ENCODE measurements at regions of chr11 and their contacts with region 1.

Region 1: DNA sequence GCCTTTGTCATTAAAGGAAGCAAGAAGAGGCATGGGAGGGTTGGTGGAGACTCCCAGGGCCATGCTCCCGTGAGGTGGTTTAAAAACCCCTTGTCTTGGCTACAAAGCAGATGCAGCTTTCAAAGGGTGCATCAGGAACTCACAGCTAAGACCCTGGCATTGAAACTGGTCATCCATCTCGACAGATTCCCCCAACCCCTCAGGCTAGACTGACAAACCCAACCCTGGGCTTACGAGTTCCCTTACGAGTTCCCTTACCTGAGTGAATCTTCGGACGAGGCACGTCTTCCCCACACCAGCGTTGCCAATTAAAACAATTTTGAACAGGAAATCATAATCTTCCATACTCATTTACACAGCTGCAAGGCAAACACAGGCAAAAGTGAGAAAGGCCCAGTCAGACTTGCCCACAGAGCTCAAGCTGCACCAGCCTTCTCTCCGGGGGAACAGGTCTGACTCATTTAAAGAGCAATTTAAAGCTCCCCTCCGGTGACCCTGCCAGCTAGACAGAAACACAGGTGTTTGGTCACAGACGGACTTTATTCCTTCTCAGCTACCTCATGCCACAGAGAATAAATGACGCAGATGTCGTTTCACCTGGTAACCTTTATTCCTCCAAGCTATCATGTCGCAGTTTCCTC is 74.6 kb downstream of the RAB30 start:
- DNase-seq: no peak
- H3K4me3 Mint-ChIP-seq: no peak overlapping the region
- H3K27ac Mint-ChIP-seq: peak overlapping the region; percentile 80
- H3K4me1 Mint-ChIP-seq: peaks cover 78% of the 10 kb centered on the region
- H3K27me3 Mint-ChIP-seq: no peaks in the 10 kb centered on the region

Region 2: DNA sequence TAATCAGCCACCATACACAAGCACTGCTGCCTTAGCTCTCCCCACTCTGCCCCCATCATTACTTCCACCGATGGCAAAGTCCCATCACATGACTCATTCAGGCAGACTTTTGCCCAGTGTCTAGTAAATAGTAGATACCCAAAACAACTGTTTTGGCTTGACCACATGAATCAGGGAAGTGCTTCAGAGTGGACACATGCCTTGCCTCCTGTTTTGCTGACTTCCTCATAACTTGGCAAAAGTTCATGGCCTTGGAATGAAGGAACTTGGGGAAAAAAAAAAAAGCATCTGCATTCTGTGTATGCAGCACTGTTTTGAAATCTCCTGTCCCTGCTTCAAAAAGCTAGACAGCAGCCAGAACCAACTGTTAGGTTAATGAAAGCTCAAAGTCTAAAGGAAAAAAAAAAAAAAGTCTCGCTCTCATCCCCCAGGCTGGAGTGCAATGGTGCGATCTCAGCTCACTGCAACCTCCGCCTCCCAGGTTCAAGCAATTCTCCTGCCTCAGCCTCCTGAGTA is 598.7 kb before region 1 on chr11:
- intact Hi-C with region 1: no loop called
- DNase-seq: no peak
- H3K4me3 Mint-ChIP-seq: no peak overlapping the region
- H3K27ac Mint-ChIP-seq: no peak overlapping the region
- H3K4me1 Mint-ChIP-seq: no peaks in the 10 kb centered on the region
- H3K27me3 Mint-ChIP-seq: no peaks in the 10 kb centered on the region

Region 3: DNA sequence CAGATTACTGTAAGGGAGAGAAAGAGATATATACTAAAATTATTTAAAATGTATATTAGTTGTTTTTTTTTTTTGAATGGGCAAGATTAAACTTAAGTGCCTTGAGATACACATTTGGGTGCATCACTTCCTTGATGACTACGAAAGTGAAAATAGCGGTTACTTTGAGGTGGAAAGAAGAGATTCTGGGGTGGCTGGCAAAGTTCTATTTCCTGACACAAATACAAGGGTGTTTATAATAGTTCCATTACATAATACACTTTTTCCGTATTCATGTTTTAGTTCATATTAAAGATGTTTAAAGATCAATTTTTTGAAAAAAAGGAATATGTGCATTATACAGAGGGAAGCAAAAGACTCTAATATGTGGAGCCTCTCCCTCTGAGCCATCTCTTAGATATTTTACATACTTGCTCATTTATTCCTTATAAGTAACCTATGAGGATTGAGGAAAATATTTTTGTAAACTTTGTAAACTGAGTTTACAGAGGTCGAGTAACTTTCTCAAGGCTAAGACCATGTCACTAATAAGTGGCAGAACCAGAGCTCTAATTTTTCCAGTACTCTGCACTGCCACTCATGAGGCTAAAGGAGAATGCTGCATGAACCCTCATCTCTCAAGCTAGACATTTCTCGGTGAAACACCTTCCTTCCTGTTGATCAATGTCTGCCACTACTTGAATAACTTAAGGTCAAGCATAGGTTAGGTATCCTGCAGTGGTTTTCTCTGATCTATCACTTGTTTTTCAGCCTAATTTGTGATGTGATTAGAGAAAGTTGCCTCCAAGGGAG is 36.9 kb before region 1 on chr11:
- intact Hi-C with region 1: loop called (anchors 1 kb)
- DNase-seq: peak; percentile 47
- H3K4me3 Mint-ChIP-seq: peak overlapping the region; percentile 34
- H3K27ac Mint-ChIP-seq: peak overlapping the region; percentile 31
- H3K4me1 Mint-ChIP-seq: peaks cover 52% of the 10 kb centered on the region
- H3K27me3 Mint-ChIP-seq: peaks cover 5% of the 10 kb centered on the region

Region 4: GRCh38 chr11:83007909-83008580 is 11.0 kb after region 1 on chr11:
- intact Hi-C with region 1: loop called (anchors 1 kb)
- DNase-seq: no peak
- H3K4me3 Mint-ChIP-seq: peak overlapping the region; percentile 61
- H3K27ac Mint-ChIP-seq: peak overlapping the region; percentile 65
- H3K4me1 Mint-ChIP-seq: peaks cover 47% of the 10 kb centered on the region
- H3K27me3 Mint-ChIP-seq: no peaks in the 10 kb centered on the region

Region 5: DNA sequence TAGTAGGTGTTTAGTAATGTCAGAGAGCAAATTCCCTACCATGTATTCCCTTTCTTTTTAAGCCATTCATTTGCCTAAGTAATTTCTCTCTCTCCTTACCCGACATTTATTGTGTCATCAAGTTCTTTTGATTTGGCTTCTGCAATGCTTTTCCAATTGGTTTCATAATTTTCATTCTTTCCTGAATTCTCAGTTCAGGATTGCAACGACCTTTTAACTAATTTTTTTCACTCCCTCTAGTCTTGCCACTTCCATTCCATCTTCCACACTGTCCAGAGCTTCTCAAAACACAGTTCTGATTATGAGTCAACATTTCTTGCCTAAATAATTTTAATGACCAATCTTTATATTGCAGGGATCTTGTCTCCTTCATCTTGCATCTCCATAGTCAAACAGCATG is 115.8 kb after region 1 on chr11:
- intact Hi-C with region 1: no loop called
- DNase-seq: no peak
- H3K4me3 Mint-ChIP-seq: no peak overlapping the region
- H3K27ac Mint-ChIP-seq: no peak overlapping the region
- H3K4me1 Mint-ChIP-seq: peaks cover 17% of the 10 kb centered on the region
- H3K27me3 Mint-ChIP-seq: peaks cover 1% of the 10 kb centered on the region

Region 6: GRCh38 chr11:83156150-83156995 is 159.3 kb after region 1 on chr11:
- intact Hi-C with region 1: loop called (anchors 2 kb)
- DNase-seq: peak; percentile 96
- H3K4me3 Mint-ChIP-seq: peak overlapping the region; percentile 99
- H3K27ac Mint-ChIP-seq: peak overlapping the region; percentile 100
- H3K4me1 Mint-ChIP-seq: peaks cover 24% of the 10 kb centered on the region
- H3K27me3 Mint-ChIP-seq: no peaks in the 10 kb centered on the region

Region 7: DNA sequence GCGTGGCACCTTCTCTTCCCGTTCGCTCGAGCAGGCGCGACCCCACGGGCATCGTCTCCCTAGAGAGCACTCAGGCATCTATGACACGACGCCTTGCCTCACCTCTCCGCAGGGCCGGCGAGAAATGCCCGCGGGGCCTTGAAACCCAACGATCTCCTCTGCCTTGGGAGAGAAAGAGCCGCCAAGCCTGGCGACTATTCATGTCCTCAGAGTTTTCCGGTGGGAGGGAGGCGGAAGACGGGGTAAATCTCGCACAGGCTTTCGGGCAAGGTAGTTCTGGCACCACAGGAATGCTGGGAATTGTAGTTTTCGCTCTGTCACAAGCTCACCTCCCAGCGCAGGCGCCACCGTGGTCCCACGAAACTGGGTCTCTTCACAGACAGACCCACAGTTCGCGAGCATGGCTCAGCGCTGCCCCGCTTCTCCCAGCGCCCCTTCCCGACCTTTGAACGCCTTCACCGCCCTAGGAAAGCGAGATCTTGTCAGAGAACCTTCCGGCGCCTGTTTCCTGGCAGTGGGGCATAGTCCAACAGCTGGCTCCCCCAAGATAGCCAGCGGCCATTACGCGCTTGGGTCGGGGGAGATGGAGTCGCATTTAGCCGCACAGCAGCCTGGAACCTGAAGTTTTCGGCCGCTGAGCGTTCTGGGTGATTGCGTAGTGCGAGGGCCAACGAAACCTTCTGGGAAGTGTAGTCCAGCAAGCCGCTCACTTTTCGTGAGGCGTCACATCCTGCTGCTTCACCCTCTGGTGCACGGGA is 288.9 kb after region 1 on chr11 and contains the start of gene CCDC90B:
- intact Hi-C with region 1: loop called (anchors 5 kb)
- DNase-seq: peak; percentile 91
- H3K4me3 Mint-ChIP-seq: peak within 1 kb of the TSS; percentile 89
- H3K27ac Mint-ChIP-seq: peak within 1 kb of the TSS; percentile 96
- H3K4me1 Mint-ChIP-seq: peaks cover 26% of the 10 kb centered on the region
- H3K27me3 Mint-ChIP-seq: peaks cover 3% of the 10 kb centered on the region
- total RNA-seq, gene CCDC90B: 25.4 and 27.2 TPM in 2 replicates